SK-N-SH (cell line): ENCODE measurements at regions of chr4 and their contacts with region 1.

Region 1: DNA sequence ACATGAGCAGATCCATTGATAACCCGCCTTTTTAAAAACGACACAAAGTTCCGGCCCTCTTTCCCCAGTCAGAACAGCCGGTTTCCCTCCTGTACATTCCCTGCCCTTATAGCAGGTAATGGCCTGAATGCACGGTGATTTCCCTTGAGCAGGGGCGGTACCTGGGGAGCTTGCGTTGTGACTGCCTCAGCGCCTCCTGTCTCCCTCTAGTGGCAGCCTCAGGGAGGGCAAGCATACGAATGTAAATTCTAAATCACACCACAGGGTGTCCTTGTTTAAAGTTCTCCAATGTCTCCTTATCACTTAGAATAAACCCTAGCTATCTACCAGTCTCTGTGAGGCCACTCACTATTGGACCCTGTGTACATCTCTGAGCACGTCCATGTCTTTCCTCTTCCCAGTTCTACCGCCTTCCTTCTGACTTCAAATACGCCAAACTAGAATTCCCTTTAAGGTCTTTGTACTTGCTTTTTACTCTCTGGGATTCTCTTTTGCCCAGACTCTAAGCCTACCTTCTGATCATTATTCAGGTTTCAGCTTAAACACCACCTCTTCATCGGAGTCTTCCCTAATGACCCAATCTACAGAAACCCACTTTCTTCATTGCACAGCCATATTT is 18.4 kb upstream of the LDB2 start:
- DNase-seq: peak; percentile 55
- H3K4me3 ChIP-seq: peak overlapping the region in 1 of 2 experiments; percentile 50; a peak in 1 of 4 replicates
- H3K27ac ChIP-seq: no peak overlapping the region
- H3K4me1 ChIP-seq: no peaks in the 10 kb centered on the region
- H3K27me3 ChIP-seq: no peaks in the 10 kb centered on the region
- CTCF ChIP-seq: peak; percentile 82
- EP300 ChIP-seq: no peak
- RAD21 ChIP-seq: peak; percentile 76

Region 2: DNA sequence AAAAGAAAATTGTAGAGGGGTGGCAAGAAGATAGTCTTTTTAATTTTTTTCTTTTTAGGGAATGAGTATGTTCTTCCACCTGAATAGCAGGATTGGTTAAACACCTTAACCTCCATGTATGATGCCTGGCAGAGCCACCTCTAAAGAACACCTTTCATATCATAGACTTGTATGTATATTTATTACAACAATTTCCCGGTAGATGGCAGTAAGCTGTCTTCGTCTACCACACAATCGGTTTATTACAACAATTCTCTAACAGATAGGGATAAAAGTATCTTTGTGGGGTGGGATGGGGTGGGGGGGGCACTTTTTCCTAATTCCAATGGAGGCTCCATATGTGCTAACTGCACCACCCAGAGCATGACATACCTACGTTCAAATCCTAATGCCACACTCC is 273.9 kb before region 1 on chr4:
- CTCF ChIA-PET with region 1: interaction called, 15 read pairs
- POLR2A ChIA-PET with region 1: no interaction called
- DNase-seq: peak; percentile 51
- H3K4me3 ChIP-seq: no peak overlapping the region
- H3K27ac ChIP-seq: no peak overlapping the region
- H3K4me1 ChIP-seq: peaks cover 0 to 11% of the 10 kb centered on the region in 2 experiments; a peak in 1 of 4 replicates
- H3K27me3 ChIP-seq: no peaks in the 10 kb centered on the region
- CTCF ChIP-seq: peak; percentile 59
- EP300 ChIP-seq: no peak
- RAD21 ChIP-seq: peak; percentile 75

Region 3: GRCh38 chr4:16938512-16939040 is 21.7 kb after region 1 on chr4:
- CTCF ChIA-PET with region 1: interaction called, 10 read pairs
- POLR2A ChIA-PET with region 1: no interaction called
- DNase-seq: peak; percentile 52
- H3K4me3 ChIP-seq: no peak overlapping the region
- H3K27ac ChIP-seq: peak overlapping the region in 1 of 2 experiments; percentile 83; a peak in 2 of 4 replicates
- H3K4me1 ChIP-seq: peaks cover 0 to 13% of the 10 kb centered on the region in 2 experiments; a peak in 1 of 4 replicates
- H3K27me3 ChIP-seq: no peaks in the 10 kb centered on the region
- CTCF ChIP-seq: no peak
- EP300 ChIP-seq: peak in 1 of 2 experiments; percentile 68; a peak in 1 of 4 replicates
- RAD21 ChIP-seq: no peak